B cell (primary cell): ENCODE measurements at regions of chrX and their contacts with region 1.

Region 1: DNA sequence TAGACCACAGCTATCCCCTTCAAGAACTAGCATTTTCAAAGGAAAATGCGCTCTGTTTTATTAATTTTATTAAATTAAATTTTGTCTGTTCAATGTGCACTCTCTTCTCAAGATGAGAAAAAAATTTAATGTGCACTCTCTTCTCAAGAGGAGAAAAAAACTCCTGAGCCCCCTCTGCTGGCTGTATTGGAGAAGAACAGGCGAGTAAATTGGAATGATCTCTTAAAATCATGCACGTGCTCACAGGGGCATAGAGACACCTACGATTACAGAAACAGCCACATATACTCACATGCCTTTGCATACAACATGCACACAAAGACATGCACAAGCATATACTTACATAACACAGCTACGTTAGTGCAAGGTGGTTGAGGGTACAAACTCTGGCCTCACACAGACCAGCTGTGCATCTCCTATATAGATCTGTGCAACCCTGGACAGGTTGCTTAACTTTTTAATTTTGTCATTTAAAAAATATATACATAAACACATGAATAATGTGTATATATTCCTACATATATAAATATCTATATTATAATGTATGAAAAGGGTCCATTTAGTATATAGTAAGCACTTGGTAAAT is 176.2 kb upstream of the CXorf66 start:
- DNase-seq: peak; percentile 5
- ATAC-seq: no peak
- H3K4me3 ChIP-seq: no peak overlapping the region
- H3K4me3 Mint-ChIP-seq: no peak overlapping the region
- H3K27ac ChIP-seq: no peak overlapping the region
- H3K27ac Mint-ChIP-seq: no peak overlapping the region
- H3K4me1 ChIP-seq: no peaks in the 10 kb centered on the region
- H3K4me1 Mint-ChIP-seq: no peaks in the 10 kb centered on the region
- H3K27me3 ChIP-seq: no peaks in the 10 kb centered on the region
- H3K27me3 Mint-ChIP-seq: no peaks in the 10 kb centered on the region
- CTCF ChIP-seq: peak; percentile 63

Region 2: DNA sequence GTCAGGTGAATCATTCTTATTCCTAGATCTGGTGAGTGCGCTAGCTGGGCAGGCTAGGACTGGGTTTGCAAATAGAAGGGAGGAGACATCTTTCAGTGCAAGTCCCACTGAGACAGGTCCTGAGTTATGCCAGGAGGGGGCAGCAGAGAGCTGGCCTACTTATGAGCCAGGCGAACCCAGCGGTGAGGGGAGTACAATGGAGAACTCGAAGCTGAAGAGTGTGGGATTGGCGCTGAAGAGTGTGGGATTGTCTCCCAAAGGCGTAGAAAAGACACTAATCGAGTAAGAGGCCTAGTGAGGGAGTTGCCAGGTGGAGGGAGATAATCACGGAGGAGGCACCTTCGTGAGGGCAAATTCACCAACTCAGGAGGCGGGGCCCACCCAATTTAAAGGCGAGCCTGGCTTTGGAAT is 84.5 kb before region 1 on chrX:
- CTCF ChIA-PET with region 1: interaction called, 3 read pairs
- POLR2A ChIA-PET with region 1: no interaction called
- intact Hi-C with region 1: loop called (anchors 10 kb)
- DNase-seq: peak; percentile 44
- ATAC-seq: no peak
- H3K4me3 ChIP-seq: no peak overlapping the region
- H3K4me3 Mint-ChIP-seq: no peak overlapping the region
- H3K27ac ChIP-seq: no peak overlapping the region
- H3K27ac Mint-ChIP-seq: no peak overlapping the region
- H3K4me1 ChIP-seq: no peaks in the 10 kb centered on the region
- H3K4me1 Mint-ChIP-seq: no peaks in the 10 kb centered on the region
- H3K27me3 ChIP-seq: no peaks in the 10 kb centered on the region
- H3K27me3 Mint-ChIP-seq: no peaks in the 10 kb centered on the region
- CTCF ChIP-seq: peak; percentile 58